B cell (primary cell): ENCODE measurements at regions of chr1 and their contacts with region 1.

Region 1: DNA sequence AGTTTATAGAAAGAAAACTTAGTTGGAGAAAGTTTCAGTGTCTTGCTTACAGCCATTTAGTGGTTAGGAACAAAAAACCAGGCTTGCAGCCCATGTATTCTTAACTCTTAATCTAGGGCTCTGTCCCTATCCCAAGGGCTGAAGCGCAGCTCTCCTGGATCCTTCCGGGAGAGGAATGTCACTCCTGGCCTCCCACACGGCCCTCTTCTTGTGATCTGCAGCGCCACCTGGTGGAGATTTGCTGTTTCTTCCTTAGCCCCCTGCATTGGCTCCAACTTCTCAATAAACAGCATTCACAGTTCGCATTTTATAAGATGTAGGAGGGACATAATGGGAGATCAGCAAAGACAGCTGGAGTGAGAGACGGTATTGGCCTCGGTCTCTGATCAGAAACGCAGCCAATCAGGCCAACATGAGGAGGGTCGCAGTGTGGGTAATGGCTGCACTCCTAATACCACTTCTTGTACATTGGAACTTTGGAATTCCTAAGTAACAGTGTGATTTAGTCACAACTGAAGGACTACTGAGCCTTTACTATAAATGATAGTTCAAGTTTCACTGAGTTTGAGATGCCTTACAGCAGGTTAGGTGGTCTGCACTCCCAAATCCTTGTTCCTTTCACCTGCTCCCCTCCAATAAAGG is 283.4 kb downstream of the ASTN1 start:
- DNase-seq: peak; percentile 48
- ATAC-seq: no peak
- H3K4me3 ChIP-seq: no peak overlapping the region
- H3K4me3 Mint-ChIP-seq: no peak overlapping the region
- H3K27ac ChIP-seq: no peak overlapping the region
- H3K27ac Mint-ChIP-seq: no peak overlapping the region
- H3K4me1 ChIP-seq: no peaks in the 10 kb centered on the region
- H3K4me1 Mint-ChIP-seq: no peaks in the 10 kb centered on the region
- H3K27me3 ChIP-seq: no peaks in the 10 kb centered on the region
- H3K27me3 Mint-ChIP-seq: no peaks in the 10 kb centered on the region
- CTCF ChIP-seq: peak; percentile 77

Region 2: GRCh38 chr1:176374967-176375569 is 506.0 kb before region 1 on chr1:
- CTCF ChIA-PET with region 1: no interaction called
- POLR2A ChIA-PET with region 1: no interaction called
- intact Hi-C with region 1: loop called (anchors 2 kb)
- DNase-seq: peak; percentile 53
- ATAC-seq: no peak
- H3K4me3 ChIP-seq: no peak overlapping the region
- H3K4me3 Mint-ChIP-seq: no peak overlapping the region
- H3K27ac ChIP-seq: no peak overlapping the region
- H3K27ac Mint-ChIP-seq: no peak overlapping the region
- H3K4me1 ChIP-seq: no peaks in the 10 kb centered on the region
- H3K4me1 Mint-ChIP-seq: no peaks in the 10 kb centered on the region
- H3K27me3 ChIP-seq: peaks cover 0 to 6% (median 0%) of the 10 kb centered on the region in 4 experiments
- H3K27me3 Mint-ChIP-seq: peaks cover 15% of the 10 kb centered on the region
- CTCF ChIP-seq: peak; percentile 91

Region 3: GRCh38 chr1:176905648-176906047 is 24.6 kb after region 1 on chr1:
- CTCF ChIA-PET with region 1: no interaction called
- POLR2A ChIA-PET with region 1: no interaction called
- intact Hi-C with region 1: no loop called
- DNase-seq: no peak
- ATAC-seq: no peak
- H3K4me3 ChIP-seq: no peak overlapping the region
- H3K4me3 Mint-ChIP-seq: no peak overlapping the region
- H3K27ac ChIP-seq: no peak overlapping the region
- H3K27ac Mint-ChIP-seq: no peak overlapping the region
- H3K4me1 ChIP-seq: no peaks in the 10 kb centered on the region
- H3K4me1 Mint-ChIP-seq: no peaks in the 10 kb centered on the region
- H3K27me3 ChIP-seq: no peaks in the 10 kb centered on the region
- H3K27me3 Mint-ChIP-seq: peaks cover 20% of the 10 kb centered on the region
- CTCF ChIP-seq: no peak

Region 4: GRCh38 chr1:176932114-176933104 is 51.3 kb after region 1 on chr1:
- CTCF ChIA-PET with region 1: no interaction called
- POLR2A ChIA-PET with region 1: no interaction called
- intact Hi-C with region 1: no loop called
- DNase-seq: no peak
- ATAC-seq: no peak
- H3K4me3 ChIP-seq: no peak overlapping the region
- H3K4me3 Mint-ChIP-seq: no peak overlapping the region
- H3K27ac ChIP-seq: no peak overlapping the region
- H3K27ac Mint-ChIP-seq: no peak overlapping the region
- H3K4me1 ChIP-seq: no peaks in the 10 kb centered on the region
- H3K4me1 Mint-ChIP-seq: no peaks in the 10 kb centered on the region
- H3K27me3 ChIP-seq: no peaks in the 10 kb centered on the region
- H3K27me3 Mint-ChIP-seq: peaks cover 12% of the 10 kb centered on the region
- CTCF ChIP-seq: no peak